Dorsolateral prefrontal cortex (tissue), 120 donors: ENCODE measurements at regions of chr3 and their contacts with region 1.

Region 1: GRCh38 chr3:72439321-72440183 is 408.7 kb downstream of the SHQ1 start:
- DNase-seq: no peak
- H3K4me3 ChIP-seq: peak overlapping the region in 6 of 59 donors; percentile 1 to 38 (median 10)
- H3K27ac ChIP-seq: peak overlapping the region in 24 of 59 donors; percentile 4 to 61 (median 22)
- H3K27me3 ChIP-seq: no peaks in the 10 kb centered on the region
- CTCF ChIP-seq: no peak

Region 2: GRCh38 chr3:72339116-72340030 is 100.2 kb before region 1 on chr3:
- intact Hi-C with region 1: loop called in 1 of 2 experiments (anchors 5 kb)
- DNase-seq: peak in 4 of 10 donors; percentile 40 to 56 (median 48)
- H3K4me3 ChIP-seq: no peak overlapping the region
- H3K27ac ChIP-seq: peak overlapping the region in 17 of 59 donors; percentile 4 to 75 (median 41)
- H3K27me3 ChIP-seq: no peaks in the 10 kb centered on the region
- CTCF ChIP-seq: no peak

Region 3: GRCh38 chr3:72591522-72592421 is 152.2 kb after region 1 on chr3:
- intact Hi-C with region 1: no loop called
- DNase-seq: peak in 2 of 10 donors; percentile 24 to 48
- H3K4me3 ChIP-seq: no peak overlapping the region
- H3K27ac ChIP-seq: no peak overlapping the region
- H3K27me3 ChIP-seq: no peaks in the 10 kb centered on the region
- CTCF ChIP-seq: no peak